Natural killer cell (primary cell): ENCODE measurements at regions of chr6 and their contacts with region 1.

Region 1: DNA sequence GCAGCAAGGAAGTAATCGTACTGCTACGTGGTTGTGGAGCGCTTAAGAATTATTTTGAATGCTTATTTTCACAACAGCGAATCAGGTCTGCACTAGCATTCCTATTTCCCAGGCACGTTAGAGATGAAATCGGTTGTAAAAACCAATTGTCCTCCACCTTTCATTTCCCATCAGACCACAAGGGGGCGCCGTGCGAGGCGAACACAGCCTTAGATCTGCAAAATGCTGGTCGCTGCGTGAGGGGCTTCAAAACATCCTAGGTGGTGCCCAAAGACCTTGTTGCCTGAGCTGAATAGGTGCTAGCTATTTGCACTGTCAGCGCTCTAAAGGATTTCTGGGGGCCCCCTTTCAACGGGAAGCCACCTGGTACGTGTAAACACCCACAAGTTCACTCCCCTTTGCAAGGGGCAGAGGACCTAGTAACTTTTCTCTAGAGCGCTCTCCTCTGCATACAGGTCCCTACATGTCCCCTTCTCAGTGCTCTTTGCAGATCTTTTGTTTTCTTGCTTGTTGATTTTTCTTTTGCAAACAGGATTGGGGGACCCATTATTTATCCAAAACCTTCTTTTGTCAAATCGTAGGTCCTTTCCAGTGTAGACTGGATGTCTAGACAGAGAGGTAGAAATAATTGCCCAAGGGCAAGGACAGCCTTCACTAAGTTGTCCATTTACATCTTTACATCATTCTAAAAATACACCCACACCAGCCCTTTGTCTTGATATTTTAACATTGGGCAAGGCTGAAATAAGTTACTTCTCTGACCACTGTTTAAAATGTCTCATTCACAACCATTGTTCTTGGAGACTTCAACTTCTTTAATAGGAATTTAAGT is 59.8 kb downstream of the NEDD9 start:
- DNase-seq: peak; percentile 76 to 86
- ATAC-seq: peak; percentile 75 to 89 (median 83)
- H3K4me3 ChIP-seq: no peak overlapping the region
- H3K4me3 Mint-ChIP-seq: peak overlapping the region; percentile 80
- H3K27ac ChIP-seq: no peak overlapping the region
- H3K27ac Mint-ChIP-seq: peak overlapping the region in 1 of 2 donors; percentile 75
- H3K4me1 ChIP-seq: peaks cover 6% of the 10 kb centered on the region
- H3K4me1 Mint-ChIP-seq: peaks cover 12 to 19% of the 10 kb centered on the region in 2 donors
- H3K27me3 ChIP-seq: no peaks in the 10 kb centered on the region
- H3K27me3 Mint-ChIP-seq: no peaks in the 10 kb centered on the region
- CTCF ChIP-seq: peak; percentile 89

Region 2: DNA sequence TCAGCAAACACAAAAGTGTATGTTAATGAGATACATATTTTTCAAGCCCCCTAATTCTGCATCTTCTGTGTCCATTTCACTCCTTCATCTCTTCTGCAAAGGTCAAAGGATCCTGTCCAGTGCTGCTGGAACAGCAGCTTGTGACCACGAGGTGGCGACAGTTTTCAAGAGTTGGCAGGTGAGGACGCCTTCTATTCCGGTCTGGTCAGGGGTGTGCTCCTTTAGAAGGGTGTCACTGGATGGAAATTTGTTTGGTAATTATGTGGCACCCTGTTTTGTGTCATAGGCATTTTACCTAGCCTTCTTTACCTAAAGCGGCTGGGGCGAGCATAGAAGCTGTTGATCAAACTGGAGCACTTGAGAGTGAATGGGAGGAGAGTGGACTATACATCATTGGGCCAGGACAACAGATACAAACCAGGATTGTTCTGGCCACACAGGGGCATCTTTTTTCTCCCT is 28.3 kb before region 1 on chr6:
- intact Hi-C with region 1: loop called (anchors 1 kb)
- DNase-seq: peak; percentile 63 to 86
- ATAC-seq: peak; percentile 82 to 97 (median 96)
- H3K4me3 ChIP-seq: no peak overlapping the region
- H3K4me3 Mint-ChIP-seq: no peak overlapping the region
- H3K27ac ChIP-seq: no peak overlapping the region
- H3K27ac Mint-ChIP-seq: no peak overlapping the region
- H3K4me1 ChIP-seq: peaks cover 3% of the 10 kb centered on the region
- H3K4me1 Mint-ChIP-seq: peaks cover 4 to 5% of the 10 kb centered on the region in 2 donors
- H3K27me3 ChIP-seq: no peaks in the 10 kb centered on the region
- H3K27me3 Mint-ChIP-seq: no peaks in the 10 kb centered on the region
- CTCF ChIP-seq: peak; percentile 86

Region 3: DNA sequence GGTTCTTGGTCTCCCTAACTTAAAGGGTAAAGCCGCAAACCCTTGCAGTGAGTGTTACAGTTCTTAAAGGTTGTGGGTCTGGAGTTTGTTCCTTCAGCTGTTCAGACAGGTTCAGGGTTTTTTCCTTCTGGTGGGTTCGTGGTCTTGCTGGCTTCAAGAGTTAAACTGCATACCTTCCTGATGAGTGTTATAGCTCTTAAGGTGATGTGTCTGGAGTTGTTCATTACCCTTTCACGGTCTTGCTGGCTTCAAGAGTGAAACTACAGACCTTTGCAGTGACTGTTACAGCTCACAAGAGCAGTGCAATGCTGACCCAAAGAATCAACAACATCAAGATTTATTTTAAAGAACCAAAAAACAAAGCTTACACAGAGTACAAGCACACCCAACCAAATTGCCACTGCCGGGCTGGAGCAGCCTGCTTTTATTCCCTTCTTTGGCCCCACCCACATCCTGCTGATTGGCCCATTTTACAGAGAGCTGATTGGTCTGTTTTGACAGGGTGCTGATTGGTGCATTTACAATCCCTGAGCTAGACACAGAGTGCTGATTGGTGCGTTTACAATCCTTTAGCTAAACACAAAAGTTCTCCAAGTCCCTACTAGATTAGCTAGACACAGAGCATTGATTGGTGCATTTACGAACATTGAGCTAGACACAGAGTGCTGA is 243.5 kb after region 1 on chr6:
- intact Hi-C with region 1: loop called (anchors 5 kb)
- DNase-seq: no peak
- ATAC-seq: no peak
- H3K4me3 ChIP-seq: no peak overlapping the region
- H3K4me3 Mint-ChIP-seq: no peak overlapping the region
- H3K27ac ChIP-seq: no peak overlapping the region
- H3K27ac Mint-ChIP-seq: no peak overlapping the region
- H3K4me1 ChIP-seq: no peaks in the 10 kb centered on the region
- H3K4me1 Mint-ChIP-seq: peaks cover 0 to 9% of the 10 kb centered on the region in 2 donors
- H3K27me3 ChIP-seq: no peaks in the 10 kb centered on the region
- H3K27me3 Mint-ChIP-seq: no peaks in the 10 kb centered on the region
- CTCF ChIP-seq: no peak